HAP-1 (cell line): ENCODE measurements at regions of chr9 and their contacts with region 1.

Region 1: GRCh38 chr9:3732077-3733038 is 206.6 kb upstream of the RFX3 start:
- DNase-seq: peak; percentile 75 to 92
- H3K4me3 ChIP-seq: no peak overlapping the region
- H3K4me1 ChIP-seq: peaks cover 13% of the 10 kb centered on the region
- H3K27me3 ChIP-seq: no peaks in the 10 kb centered on the region

Region 2: GRCh38 chr9:4117835-4118610 is 385.7 kb after region 1 on chr9:
- in situ Hi-C with region 1: loop called (anchors 5 kb)
- DNase-seq: peak; percentile 28 to 82
- H3K4me3 ChIP-seq: no peak overlapping the region
- H3K4me1 ChIP-seq: no peaks in the 10 kb centered on the region
- H3K27me3 ChIP-seq: no peaks in the 10 kb centered on the region

Region 3: DNA sequence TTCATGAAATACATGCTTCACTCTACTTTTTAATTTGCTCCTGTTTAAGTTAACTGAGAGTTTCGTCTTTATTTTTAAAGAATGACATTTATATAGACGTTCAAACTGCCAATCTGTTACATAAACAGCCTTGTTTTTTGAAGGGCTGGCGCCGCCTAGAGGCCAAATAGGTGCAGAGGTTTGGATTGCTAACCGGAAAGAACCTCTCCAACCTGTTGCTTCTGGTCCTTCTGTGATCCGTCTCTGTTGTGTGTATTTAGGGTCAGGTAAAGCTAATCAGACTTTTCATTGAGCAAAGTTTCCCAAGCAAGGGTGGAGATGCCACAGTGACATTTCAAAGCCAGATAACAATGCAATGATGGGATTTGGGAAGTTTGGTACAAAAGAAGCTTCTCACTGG is 607.0 kb after region 1 on chr9:
- in situ Hi-C with region 1: loop called (anchors 25 kb)
- DNase-seq: peak; percentile 72 to 89
- H3K4me3 ChIP-seq: no peak overlapping the region
- H3K4me1 ChIP-seq: no peaks in the 10 kb centered on the region; the same call in 1 of the 2 replicates
- H3K27me3 ChIP-seq: no peaks in the 10 kb centered on the region